T-cell (primary cell): ENCODE measurements at regions of chr5 and their contacts with region 1.

Region 1: DNA sequence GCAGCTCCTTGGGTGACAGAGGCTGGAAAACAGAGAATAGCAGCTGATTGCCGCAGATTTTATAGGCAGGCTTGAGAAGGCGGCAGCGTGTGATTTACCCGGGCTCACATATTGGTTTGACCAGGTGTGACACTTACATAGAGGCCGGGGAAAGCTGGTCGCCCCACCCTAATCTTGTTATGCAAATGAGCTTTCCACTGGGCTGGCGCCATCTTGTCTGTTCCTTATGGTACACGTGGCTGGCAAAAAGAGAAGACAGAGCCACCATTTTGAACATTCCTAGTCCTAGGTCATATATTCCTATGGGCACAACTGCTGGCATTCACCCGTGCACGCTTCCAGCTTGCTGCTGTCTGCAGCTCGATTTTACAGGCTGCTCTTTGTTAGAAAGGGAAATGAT is 11.3 kb upstream of the SPZ1 start:
- DNase-seq: no peak
- ATAC-seq: no peak
- H3K4me3 ChIP-seq: no peak overlapping the region
- H3K4me3 Mint-ChIP-seq: no peak overlapping the region
- H3K27ac ChIP-seq: no peak overlapping the region
- H3K27ac Mint-ChIP-seq: no peak overlapping the region
- H3K4me1 ChIP-seq: no peaks in the 10 kb centered on the region
- H3K4me1 Mint-ChIP-seq: no peaks in the 10 kb centered on the region
- H3K27me3 ChIP-seq: peaks cover 0 to 2% of the 10 kb centered on the region in 2 experiments
- H3K27me3 Mint-ChIP-seq: no peaks in the 10 kb centered on the region

Region 2: DNA sequence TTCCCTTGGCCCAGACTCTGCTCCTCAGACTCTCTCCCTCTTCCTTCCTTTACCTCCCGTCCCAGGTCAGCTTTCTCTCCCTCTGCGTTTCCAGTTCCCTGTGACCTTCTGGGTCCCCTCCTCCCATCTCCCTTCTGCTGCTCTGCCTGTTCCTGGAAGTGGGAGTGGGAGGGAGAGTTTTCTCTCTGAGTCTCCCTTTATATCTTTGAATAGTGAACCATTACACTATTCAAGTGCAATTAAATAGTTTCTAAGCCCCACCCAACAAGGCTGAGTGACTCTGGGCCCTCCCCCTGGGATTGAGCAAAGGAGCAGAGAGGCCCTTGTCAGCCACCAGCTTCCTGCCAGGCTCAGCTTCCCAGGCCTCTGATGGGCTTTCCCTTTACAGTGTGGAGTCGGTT is 238.6 kb before region 1 on chr5:
- CTCF ChIA-PET with region 1: interaction called in 1 of 2 experiments, 10 read pairs
- POLR2A ChIA-PET with region 1: no interaction called
- DNase-seq: no peak
- ATAC-seq: no peak
- H3K4me3 ChIP-seq: no peak overlapping the region
- H3K4me3 Mint-ChIP-seq: no peak overlapping the region
- H3K27ac ChIP-seq: no peak overlapping the region
- H3K27ac Mint-ChIP-seq: no peak overlapping the region
- H3K4me1 ChIP-seq: no peaks in the 10 kb centered on the region
- H3K4me1 Mint-ChIP-seq: no peaks in the 10 kb centered on the region
- H3K27me3 ChIP-seq: no peaks in the 10 kb centered on the region
- H3K27me3 Mint-ChIP-seq: no peaks in the 10 kb centered on the region

Region 3: DNA sequence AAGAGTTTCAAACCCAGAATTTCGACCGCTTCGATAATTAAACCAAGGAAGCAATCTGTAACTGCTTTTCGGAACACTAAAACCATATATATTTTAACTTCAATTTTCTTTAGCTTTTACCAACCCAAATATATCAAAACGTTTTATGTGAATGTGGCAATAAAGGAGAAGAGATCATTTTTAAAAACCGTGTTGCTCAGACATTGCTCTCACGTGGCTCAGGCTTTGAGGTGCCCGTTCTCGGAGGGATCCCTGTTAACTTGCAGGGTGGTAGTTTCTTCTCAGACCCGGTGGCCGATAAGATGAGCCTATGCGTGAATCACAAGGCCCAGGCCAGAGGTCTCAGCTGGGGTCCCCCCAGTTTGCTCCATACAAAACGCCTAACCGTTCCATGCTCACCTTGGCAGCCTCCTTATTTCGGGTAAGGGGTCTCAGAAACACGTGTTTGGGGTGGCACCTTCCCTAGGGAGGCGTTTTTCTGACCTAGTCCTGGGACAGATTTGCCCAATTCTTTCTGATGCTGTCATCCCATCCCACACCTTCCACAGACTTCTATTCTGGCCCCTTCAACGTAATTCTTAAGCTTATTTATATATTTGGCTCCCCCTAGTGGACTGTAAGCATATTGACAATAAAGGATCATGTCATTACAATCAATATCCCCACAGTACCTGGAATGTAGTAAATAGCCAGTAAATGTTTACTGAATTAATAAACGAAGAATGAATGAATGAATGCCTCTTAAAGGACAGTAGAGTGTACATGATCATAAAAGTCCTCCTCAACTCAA is 225.2 kb before region 1 on chr5:
- CTCF ChIA-PET with region 1: interaction called, 7 to 169 read pairs
- POLR2A ChIA-PET with region 1: no interaction called
- DNase-seq: peak in 10 of 35 experiments; percentile 1 to 65 (median 13)
- ATAC-seq: peak; percentile 63 to 81 (median 79)
- H3K4me3 ChIP-seq: peak overlapping the region; percentile 25 to 44
- H3K4me3 Mint-ChIP-seq: peak overlapping the region; percentile 62 to 82 (median 64)
- H3K27ac ChIP-seq: peak overlapping the region; percentile 45
- H3K27ac Mint-ChIP-seq: peak overlapping the region; percentile 58 to 82
- H3K4me1 ChIP-seq: peaks cover 4 to 8% of the 10 kb centered on the region in 2 experiments
- H3K4me1 Mint-ChIP-seq: peaks cover 7 to 12% (median 10%) of the 10 kb centered on the region in 3 donors
- H3K27me3 ChIP-seq: no peaks in the 10 kb centered on the region
- H3K27me3 Mint-ChIP-seq: no peaks in the 10 kb centered on the region

Region 4: DNA sequence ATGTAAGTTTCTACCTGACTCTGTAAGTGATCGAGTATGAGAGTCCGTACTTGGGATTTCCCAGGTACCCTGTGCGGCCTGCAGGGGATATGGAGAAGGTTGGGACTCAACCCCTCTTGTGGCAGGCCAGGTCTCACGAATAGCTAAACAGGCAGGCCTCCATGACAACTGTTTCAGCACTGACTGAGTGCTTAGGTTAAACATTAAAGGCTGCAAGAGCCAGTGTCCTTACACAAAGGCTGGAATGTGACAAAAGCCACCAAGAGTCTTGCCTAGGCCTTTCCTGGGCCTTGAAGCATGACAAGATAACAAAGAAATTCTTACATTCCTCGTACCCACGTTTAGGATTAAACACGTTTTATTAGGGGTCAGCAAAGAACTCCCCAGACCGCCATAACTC is 214.7 kb before region 1 on chr5:
- CTCF ChIA-PET with region 1: interaction called, 39 to 169 read pairs
- POLR2A ChIA-PET with region 1: interaction called in 1 of 2 experiments, 6 read pairs
- DNase-seq: no peak
- ATAC-seq: no peak
- H3K4me3 ChIP-seq: no peak overlapping the region
- H3K4me3 Mint-ChIP-seq: no peak overlapping the region
- H3K27ac ChIP-seq: no peak overlapping the region
- H3K27ac Mint-ChIP-seq: peak overlapping the region; percentile 87 to 94
- H3K4me1 ChIP-seq: peaks cover 11 to 23% of the 10 kb centered on the region in 2 experiments
- H3K4me1 Mint-ChIP-seq: peaks cover 29 to 45% (median 31%) of the 10 kb centered on the region in 3 donors
- H3K27me3 ChIP-seq: no peaks in the 10 kb centered on the region
- H3K27me3 Mint-ChIP-seq: no peaks in the 10 kb centered on the region

Region 5: GRCh38 chr5:80141147-80141671 is 167.3 kb before region 1 on chr5:
- CTCF ChIA-PET with region 1: interaction called, 3 to 12 read pairs
- POLR2A ChIA-PET with region 1: no interaction called
- DNase-seq: no peak
- ATAC-seq: no peak
- H3K4me3 ChIP-seq: no peak overlapping the region
- H3K4me3 Mint-ChIP-seq: peak overlapping the region; percentile 4 to 43 (median 32)
- H3K27ac ChIP-seq: peak overlapping the region; percentile 48
- H3K27ac Mint-ChIP-seq: peak overlapping the region; percentile 94 to 96
- H3K4me1 ChIP-seq: peaks cover 32 to 61% of the 10 kb centered on the region in 2 experiments
- H3K4me1 Mint-ChIP-seq: peaks cover 81 to 88% (median 82%) of the 10 kb centered on the region in 3 donors
- H3K27me3 ChIP-seq: no peaks in the 10 kb centered on the region
- H3K27me3 Mint-ChIP-seq: no peaks in the 10 kb centered on the region

Region 6: GRCh38 chr5:80216753-80217596 is 91.6 kb before region 1 on chr5:
- CTCF ChIA-PET with region 1: no interaction called
- POLR2A ChIA-PET with region 1: no interaction called
- DNase-seq: peak in 2 of 35 experiments; percentile 16 to 18
- ATAC-seq: peak in 3 of 4 experiments; percentile 21 to 46 (median 24)
- H3K4me3 ChIP-seq: no peak overlapping the region
- H3K4me3 Mint-ChIP-seq: peak overlapping the region; percentile 62 to 74 (median 73)
- H3K27ac ChIP-seq: peak overlapping the region; percentile 10
- H3K27ac Mint-ChIP-seq: peak overlapping the region; percentile 92 to 94
- H3K4me1 ChIP-seq: peaks cover 48 to 77% of the 10 kb centered on the region in 2 experiments
- H3K4me1 Mint-ChIP-seq: peaks cover 89 to 95% (median 94%) of the 10 kb centered on the region in 3 donors
- H3K27me3 ChIP-seq: no peaks in the 10 kb centered on the region
- H3K27me3 Mint-ChIP-seq: no peaks in the 10 kb centered on the region

Region 7: GRCh38 chr5:80255732-80256479 is 52.6 kb before region 1 on chr5 and contains the start of gene SERINC5:
- CTCF ChIA-PET with region 1: interaction called, 5 to 10 read pairs
- POLR2A ChIA-PET with region 1: interaction called, 7 to 8 read pairs
- DNase-seq: peak; percentile 64 to 87 (median 79)
- ATAC-seq: peak; percentile 81 to 88 (median 83)
- H3K4me3 ChIP-seq: peak within 1 kb of the TSS; percentile 97 to 98
- H3K4me3 Mint-ChIP-seq: peak within 1 kb of the TSS; percentile 95 to 97 (median 97)
- H3K27ac ChIP-seq: peak within 1 kb of the TSS; percentile 89
- H3K27ac Mint-ChIP-seq: peak within 1 kb of the TSS; percentile 96 to 97
- H3K4me1 ChIP-seq: peaks cover 30 to 54% of the 10 kb centered on the region in 2 experiments
- H3K4me1 Mint-ChIP-seq: peaks cover 45 to 55% (median 54%) of the 10 kb centered on the region in 3 donors
- H3K27me3 ChIP-seq: no peaks in the 10 kb centered on the region
- H3K27me3 Mint-ChIP-seq: no peaks in the 10 kb centered on the region
- total RNA-seq, gene SERINC5: 109 to 170 (median 112) TPM

Region 8: DNA sequence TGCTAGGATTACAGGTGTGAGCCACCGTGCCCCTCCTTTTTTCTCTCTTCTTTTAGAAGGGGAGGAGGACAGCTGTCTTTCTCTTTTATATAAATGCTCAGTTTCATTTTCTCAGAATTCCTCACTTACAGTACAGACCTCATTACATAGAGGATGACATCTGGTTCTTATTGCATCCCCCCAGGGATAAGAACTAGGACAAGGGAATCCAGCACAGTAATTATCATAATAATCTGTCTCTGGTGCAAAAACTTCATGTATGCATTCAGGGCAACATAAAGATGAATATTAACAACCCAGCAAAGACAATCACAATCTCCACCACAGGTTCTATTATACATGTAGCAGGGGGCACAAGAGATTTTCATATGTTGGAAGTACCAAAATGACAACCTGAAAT is 16.4 kb after region 1 on chr5:
- CTCF ChIA-PET with region 1: interaction called in 1 of 2 experiments, 10 read pairs
- POLR2A ChIA-PET with region 1: no interaction called
- DNase-seq: no peak
- ATAC-seq: no peak
- H3K4me3 ChIP-seq: no peak overlapping the region
- H3K4me3 Mint-ChIP-seq: no peak overlapping the region
- H3K27ac ChIP-seq: no peak overlapping the region
- H3K27ac Mint-ChIP-seq: no peak overlapping the region
- H3K4me1 ChIP-seq: no peaks in the 10 kb centered on the region
- H3K4me1 Mint-ChIP-seq: no peaks in the 10 kb centered on the region
- H3K27me3 ChIP-seq: peaks cover 0 to 3% of the 10 kb centered on the region in 2 experiments
- H3K27me3 Mint-ChIP-seq: peaks cover 0 to 7% of the 10 kb centered on the region in 2 donors

Region 9: DNA sequence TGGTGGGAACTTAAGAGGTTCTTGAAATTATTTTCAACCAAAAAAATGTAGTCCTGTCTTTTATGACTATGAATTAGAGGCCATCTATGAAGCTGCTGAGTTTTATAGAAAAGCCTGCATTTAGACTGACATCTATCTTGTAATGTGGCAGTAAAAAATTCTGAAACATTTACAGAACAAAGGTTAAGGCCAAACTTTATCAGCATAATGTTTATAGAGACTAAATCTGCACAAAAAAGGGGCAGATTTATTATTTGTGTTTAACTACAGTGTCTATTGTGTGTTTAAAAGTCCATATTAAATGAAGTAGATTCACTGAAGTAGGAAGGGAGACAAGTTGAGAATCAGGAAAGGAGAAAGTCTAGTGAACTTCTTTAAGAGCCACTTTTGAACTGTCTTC is 298.8 kb after region 1 on chr5:
- CTCF ChIA-PET with region 1: no interaction called
- POLR2A ChIA-PET with region 1: no interaction called
- DNase-seq: no peak
- ATAC-seq: no peak
- H3K4me3 ChIP-seq: no peak overlapping the region
- H3K4me3 Mint-ChIP-seq: no peak overlapping the region
- H3K27ac ChIP-seq: no peak overlapping the region
- H3K27ac Mint-ChIP-seq: no peak overlapping the region
- H3K4me1 ChIP-seq: no peaks in the 10 kb centered on the region
- H3K4me1 Mint-ChIP-seq: no peaks in the 10 kb centered on the region
- H3K27me3 ChIP-seq: no peaks in the 10 kb centered on the region
- H3K27me3 Mint-ChIP-seq: no peaks in the 10 kb centered on the region